CD14-positive monocyte (primary cell): ENCODE measurements at regions of chrX and their contacts with region 1.

Region 1: DNA sequence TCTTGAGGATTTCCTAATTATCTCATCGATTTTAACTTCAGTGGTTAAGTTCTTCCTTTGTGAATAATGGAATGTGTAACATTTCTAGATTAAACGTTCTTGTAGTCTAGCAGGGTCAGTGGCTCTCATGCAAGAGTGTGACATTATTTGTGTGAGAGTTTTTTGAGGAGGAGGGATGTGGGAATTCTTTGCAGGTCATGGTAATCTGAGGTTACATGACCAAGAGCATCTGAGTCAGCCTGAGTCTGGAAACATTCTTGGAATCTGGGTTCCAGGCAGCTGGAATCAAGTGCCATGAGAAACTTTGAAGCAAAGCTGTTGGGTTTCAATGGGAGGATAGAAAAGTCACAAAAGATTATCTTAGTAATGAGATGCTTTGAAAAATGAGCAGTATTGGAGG is 49.5 kb downstream of the GK start:
- DNase-seq: no peak
- H3K4me3 ChIP-seq: no peak overlapping the region
- H3K4me3 Mint-ChIP-seq: no peak overlapping the region
- H3K27ac ChIP-seq: no peak overlapping the region
- H3K27ac Mint-ChIP-seq: no peak overlapping the region
- H3K4me1 ChIP-seq: no peaks in the 10 kb centered on the region
- H3K4me1 Mint-ChIP-seq: no peaks in the 10 kb centered on the region
- H3K27me3 ChIP-seq: peaks cover 0 to 16% of the 10 kb centered on the region in 2 donors
- H3K27me3 Mint-ChIP-seq: peaks cover 0 to 22% (median 0%) of the 10 kb centered on the region in 3 donors
- CTCF ChIP-seq: no peak

Region 2: DNA sequence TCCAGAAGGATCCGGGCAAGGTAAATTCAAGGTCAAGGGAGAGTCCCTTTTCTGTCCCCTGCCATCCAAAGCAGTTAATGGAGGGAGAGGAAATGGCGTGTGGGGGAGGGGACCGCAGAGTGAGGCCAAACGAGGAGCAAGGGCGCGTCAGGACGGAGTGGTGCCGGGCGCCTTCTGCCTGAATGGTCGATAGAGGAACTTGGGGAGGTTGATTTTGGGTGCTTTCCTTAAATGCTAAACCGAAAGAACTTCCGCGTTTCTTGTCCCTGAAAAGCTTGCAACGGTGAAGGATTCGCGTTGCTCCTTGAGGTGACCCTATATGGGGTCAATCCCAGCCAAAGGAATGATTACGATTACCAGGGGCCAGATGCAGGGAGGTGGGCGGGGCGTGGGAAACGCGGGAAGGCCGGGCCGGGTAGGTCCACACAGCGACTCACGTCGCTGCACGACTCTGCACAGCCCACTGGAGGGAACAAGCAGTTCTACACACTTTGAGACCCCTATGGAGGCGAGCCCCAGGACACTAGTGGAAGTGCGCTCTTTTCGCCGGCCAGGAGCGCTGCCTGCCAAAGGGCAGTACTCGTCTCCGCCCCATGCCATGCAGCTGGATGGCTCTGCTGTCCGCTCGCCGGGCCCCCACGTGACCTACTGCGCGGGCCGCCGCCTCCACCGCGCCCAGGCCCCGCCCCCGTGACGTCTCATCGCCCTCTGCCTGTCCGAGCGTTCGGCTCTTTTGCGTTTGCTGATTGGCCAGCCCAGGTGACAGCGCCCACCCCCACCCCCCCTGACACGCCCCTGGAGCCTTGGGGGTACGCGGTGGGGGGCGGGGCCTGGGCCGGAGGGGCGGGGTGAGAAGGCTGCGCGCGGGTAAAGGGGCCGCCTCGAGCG is 50.0 kb before region 1 on chrX:
- intact Hi-C with region 1: loop called in 1 of 2 experiments (anchors 10 kb)
- DNase-seq: peak; percentile 89 to 95 (median 94)
- H3K4me3 ChIP-seq: peak overlapping the region; percentile 26 to 78 (median 64)
- H3K4me3 Mint-ChIP-seq: peak overlapping the region; percentile 90 to 91
- H3K27ac ChIP-seq: peak overlapping the region; percentile 99
- H3K27ac Mint-ChIP-seq: peak overlapping the region; percentile 95 to 99 (median 98)
- H3K4me1 ChIP-seq: peaks cover 40 to 44% of the 10 kb centered on the region in 2 donors
- H3K4me1 Mint-ChIP-seq: peaks cover 38% of the 10 kb centered on the region
- H3K27me3 ChIP-seq: peaks cover 0 to 8% of the 10 kb centered on the region in 2 donors
- H3K27me3 Mint-ChIP-seq: peaks cover 0 to 32% (median 0%) of the 10 kb centered on the region in 3 donors
- CTCF ChIP-seq: no peak